ENCODE measurements at regions of chr2 and their contacts with region 1.

Region 1: GRCh38 chr2:10072656-10073480 is 7.3 kb downstream of the CYS1 start:
- DNase-seq: no peak
- H3K4me3 ChIP-seq: peak overlapping the region in 2 of 4 donors; percentile 9 to 13
- H3K27ac ChIP-seq: no peak overlapping the region
- H3K4me1 ChIP-seq: peaks cover 3 to 34% (median 21%) of the 10 kb centered on the region in 4 donors
- H3K27me3 ChIP-seq: no peaks in the 10 kb centered on the region
- CTCF ChIP-seq: peak; percentile 82 to 88 (median 84)
- EP300 ChIP-seq: no peak
- POLR2A ChIP-seq: no peak

Region 2: DNA sequence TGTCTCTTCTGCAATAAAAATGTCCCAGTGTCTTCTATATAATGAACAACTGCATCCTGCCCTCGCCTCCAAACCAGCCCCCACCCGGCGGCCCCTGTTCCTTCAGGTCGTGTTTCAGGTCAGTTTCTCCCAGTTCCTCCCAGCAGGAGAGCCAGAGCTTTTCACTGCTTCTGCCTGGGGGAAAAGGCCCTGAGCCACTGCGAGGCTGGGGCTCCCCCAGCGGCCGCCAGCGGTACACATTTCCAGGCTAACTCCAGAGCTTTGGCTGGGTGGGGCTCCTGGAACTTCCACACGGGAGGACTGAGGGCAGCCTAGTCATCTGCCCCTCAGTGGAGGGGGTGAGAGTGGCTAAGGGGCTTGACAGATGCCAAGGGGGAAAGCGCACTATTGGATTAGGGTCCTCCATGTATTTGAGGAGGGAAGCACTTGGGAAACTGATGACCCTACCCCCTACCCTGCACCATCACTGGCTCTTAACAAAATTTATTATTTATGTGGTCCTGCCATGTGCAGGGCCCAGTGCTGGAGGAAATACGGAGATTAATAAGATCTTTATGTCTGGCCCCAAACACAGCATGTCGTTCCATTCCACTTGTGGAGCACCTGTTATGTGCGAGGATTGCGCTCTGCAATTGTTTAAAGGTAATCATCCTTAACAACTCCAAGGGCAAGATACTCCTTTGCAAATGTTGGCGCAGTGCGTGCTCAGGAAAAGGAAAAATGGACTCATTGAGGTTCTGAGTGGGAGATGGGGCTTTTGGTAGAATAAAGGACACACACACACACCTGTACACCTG is 24.7 kb after region 1 on chr2:
- intact Hi-C with region 1: loop called (anchors 2 kb)
- DNase-seq: no peak
- H3K4me3 ChIP-seq: no peak overlapping the region
- H3K27ac ChIP-seq: no peak overlapping the region
- H3K4me1 ChIP-seq: peaks cover 0 to 13% (median 10%) of the 10 kb centered on the region in 4 donors
- H3K27me3 ChIP-seq: peaks cover 0 to 18% (median 0%) of the 10 kb centered on the region in 4 donors
- CTCF ChIP-seq: peak in 2 of 3 experiments; percentile 86 to 90
- EP300 ChIP-seq: no peak
- POLR2A ChIP-seq: no peak

Region 3: DNA sequence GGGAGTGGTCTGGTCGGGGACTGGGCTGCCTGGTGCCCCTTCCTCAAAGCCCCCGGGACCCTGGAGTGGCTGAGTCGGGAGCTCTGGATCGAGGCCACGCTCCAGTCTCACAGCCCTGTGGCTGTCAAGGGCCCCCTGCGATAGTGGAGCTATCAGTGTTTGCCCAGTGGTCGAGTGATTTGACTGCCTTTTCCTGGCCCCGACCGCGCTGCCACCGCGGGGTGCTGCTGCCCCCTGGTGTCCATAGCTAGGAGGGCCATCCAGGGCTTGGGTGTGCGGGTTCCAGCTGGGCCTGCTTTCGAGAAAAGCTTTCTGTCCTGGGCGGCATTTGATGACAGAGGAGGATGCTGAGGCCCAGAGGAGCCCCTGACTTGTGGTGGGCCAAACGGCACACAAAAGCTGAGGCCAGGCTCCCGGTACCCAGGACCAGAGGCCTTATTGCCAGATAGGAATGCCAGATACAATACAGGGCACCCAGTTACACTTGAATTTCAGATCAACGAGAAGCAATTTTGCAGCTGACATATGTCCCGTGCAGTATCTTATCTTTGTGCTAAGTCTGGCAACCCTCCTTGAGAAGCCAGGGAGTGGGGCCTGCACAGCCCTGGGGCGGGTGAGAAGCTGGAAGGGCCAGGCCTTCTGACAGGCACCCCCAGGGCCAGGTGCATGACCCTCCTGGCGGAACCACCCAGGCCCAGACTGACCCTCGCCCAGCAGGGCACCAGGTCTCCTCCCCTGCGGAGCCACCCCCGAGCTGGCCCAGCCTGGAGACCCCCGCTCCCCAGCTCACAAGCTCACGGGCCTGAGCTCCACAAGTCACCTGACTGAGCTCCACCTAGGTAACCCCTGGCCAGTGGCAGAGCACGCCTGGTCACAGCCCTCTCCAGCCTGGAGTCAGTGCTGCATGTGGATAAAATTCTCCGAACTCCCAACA is 362.3 kb after region 1 on chr2:
- intact Hi-C with region 1: loop called (anchors 5 kb)
- DNase-seq: no peak
- H3K4me3 ChIP-seq: no peak overlapping the region
- H3K27ac ChIP-seq: no peak overlapping the region
- H3K4me1 ChIP-seq: peaks cover 12 to 33% (median 28%) of the 10 kb centered on the region in 4 donors
- H3K27me3 ChIP-seq: peaks cover 0 to 30% (median 4%) of the 10 kb centered on the region in 4 donors
- CTCF ChIP-seq: peak in 2 of 3 experiments; percentile 94
- EP300 ChIP-seq: no peak
- POLR2A ChIP-seq: no peak

Measured in esophagus muscularis mucosa (tissue), 4 donors.